Posterior cingulate gyrus (tissue), 11 donors: ENCODE measurements at regions of chr1 and their contacts with region 1.

Region 1: DNA sequence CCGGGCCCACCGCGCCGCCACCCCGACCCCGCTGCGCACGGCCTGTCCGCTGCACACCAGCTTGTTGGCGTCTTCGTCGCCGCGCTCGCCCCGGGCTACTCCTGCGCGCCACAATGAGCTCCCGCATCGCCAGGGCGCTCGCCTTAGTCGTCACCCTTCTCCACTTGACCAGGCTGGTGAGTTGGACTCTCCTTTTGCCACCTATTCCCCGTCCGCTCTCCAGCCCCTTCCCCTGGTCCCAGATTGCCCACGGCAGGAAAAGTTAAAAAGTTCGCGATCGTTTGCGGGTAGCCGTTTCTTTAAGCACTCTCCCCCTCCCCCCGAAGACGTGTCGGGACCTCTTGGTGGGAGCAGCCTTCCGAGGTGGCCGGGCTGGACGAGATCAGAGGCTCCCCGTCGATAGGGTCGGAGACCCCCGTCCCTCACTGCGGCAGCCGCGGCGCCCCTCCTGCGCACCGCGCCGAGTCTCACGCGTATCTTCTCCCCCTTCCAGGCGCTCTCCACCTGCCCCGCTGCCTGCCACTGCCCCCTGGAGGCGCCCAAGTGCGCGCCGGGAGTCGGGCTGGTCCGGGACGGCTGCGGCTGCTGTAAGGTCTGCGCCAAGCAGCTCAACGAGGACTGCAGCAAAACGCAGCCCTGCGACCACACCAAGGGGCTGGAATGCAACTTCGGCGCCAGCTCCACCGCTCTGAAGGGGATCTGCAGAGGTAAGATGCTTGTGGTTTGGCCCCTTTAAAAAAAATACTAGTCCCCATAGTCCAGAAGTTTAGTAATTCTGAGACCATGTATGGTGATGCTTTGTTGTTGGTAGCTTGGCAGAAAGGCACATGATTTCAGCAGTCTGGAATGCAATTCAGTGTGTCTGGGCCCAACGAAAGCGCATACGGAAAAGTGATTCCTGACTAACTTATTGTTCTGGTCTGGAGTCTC is 576 bp downstream of the CCN1 start:
- DNase-seq: peak in 9 of 10 donors; percentile 26 to 90 (median 44)

Region 2: DNA sequence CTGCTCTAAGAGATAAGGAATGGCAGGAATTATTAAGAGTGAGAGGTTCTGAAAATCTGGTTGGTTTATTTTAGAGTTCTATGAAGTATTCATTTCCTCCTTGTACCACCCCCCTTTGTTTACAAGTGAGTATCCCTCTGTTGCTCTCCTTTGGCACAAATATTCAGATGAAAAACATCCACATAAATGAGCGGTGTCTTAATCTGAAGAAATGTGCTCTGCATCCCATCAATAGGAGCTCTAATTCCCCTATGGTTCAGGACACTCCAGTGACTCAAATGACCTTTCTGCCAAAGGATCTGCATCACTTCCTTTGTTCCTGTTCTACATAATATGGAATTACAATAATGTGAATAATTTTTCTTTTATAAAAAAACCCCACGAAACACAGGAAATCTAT is 132.8 kb before region 1 on chr1:
- intact Hi-C with region 1: no loop called
- DNase-seq: no peak

Region 3: DNA sequence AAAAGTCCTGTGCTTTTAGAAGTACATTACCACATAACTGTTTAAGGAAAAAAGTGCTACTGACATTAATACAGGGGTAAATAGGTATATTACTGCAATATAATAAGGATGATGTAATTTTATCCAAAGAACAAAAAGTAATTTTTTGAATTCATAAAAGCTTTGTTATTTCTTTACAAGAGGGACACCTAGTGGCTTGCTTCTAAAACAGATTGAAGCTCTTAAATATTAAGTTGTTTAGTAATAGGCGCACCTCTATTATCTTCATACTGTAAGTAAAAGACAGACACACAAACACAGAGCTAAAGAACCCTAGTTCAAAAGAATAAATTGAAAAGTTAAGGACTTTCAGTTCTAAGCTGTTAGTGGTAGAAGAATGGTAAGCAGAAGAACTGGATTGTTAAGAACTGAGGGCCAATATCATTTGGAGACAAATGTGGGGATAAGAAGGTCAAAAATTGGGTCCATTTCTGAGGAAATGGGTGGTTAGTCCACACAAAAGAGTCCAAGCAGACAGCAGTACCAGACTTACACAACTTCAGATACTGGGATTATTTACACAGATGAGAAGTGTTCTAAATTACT is 111.7 kb after region 1 on chr1:
- intact Hi-C with region 1: loop called (anchors 10 kb)
- DNase-seq: no peak